HepG2 (cell line): ENCODE measurements at regions of chr20 and their contacts with region 1.

Region 1: DNA sequence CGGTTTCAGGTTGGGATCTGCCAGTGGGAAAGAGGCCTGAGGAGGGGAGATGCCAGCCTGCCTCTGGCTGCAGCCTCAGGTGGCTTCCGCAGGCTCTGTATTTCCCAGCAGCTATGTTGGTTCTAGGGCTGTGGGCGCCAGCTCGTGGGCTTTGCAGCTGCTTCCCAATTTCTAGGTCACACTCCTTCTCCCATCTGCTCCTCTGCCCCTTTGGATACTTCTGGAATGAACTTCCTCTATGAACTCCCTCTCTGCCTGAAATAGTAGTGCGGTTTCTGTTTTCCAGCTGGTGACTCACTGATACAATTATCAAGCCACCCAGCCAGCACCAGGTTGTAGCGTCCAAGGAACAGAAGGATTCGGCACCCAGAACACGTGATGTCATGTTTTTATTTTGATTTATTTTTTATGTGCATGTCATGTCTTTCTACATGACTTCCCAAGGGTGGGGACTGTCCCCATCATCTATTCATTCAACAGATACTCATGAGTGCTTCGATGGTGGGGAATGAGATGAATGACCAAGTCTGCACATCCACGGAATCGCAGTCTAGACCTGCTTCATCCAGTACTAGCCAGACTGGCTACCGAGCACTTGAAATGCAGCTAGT is 38.0 kb downstream of the TGM2 start:
- DNase-seq: no peak
- ATAC-seq: no peak
- H3K4me3 ChIP-seq: no peak overlapping the region
- H3K27ac ChIP-seq: no peak overlapping the region
- H3K4me1 ChIP-seq: peaks cover 64% of the 10 kb centered on the region
- H3K27me3 ChIP-seq: no peaks in the 10 kb centered on the region
- CTCF ChIP-seq: no peak
- EP300 ChIP-seq: no peak
- POLR2A ChIP-seq: no peak
- RAD21 ChIP-seq: no peak

Region 2: GRCh38 chr20:38113401-38114325 is 13.5 kb before region 1 on chr20:
- CTCF ChIA-PET with region 1: no interaction called
- POLR2A ChIA-PET with region 1: interaction called, 15 read pairs
- in situ Hi-C with region 1: no loop called
- intact Hi-C with region 1: loop called (anchors 2 kb)
- DNase-seq: peak; percentile 78
- ATAC-seq: peak; percentile 73
- H3K4me3 ChIP-seq: no peak overlapping the region
- H3K27ac ChIP-seq: no peak overlapping the region
- H3K4me1 ChIP-seq: peaks cover 51% of the 10 kb centered on the region
- H3K27me3 ChIP-seq: no peaks in the 10 kb centered on the region
- CTCF ChIP-seq: peak; percentile 81
- EP300 ChIP-seq: no peak
- POLR2A ChIP-seq: no peak
- RAD21 ChIP-seq: peak; percentile 78